ENCODE measurements at regions of chr10 and their contacts with region 1.

Region 1: DNA sequence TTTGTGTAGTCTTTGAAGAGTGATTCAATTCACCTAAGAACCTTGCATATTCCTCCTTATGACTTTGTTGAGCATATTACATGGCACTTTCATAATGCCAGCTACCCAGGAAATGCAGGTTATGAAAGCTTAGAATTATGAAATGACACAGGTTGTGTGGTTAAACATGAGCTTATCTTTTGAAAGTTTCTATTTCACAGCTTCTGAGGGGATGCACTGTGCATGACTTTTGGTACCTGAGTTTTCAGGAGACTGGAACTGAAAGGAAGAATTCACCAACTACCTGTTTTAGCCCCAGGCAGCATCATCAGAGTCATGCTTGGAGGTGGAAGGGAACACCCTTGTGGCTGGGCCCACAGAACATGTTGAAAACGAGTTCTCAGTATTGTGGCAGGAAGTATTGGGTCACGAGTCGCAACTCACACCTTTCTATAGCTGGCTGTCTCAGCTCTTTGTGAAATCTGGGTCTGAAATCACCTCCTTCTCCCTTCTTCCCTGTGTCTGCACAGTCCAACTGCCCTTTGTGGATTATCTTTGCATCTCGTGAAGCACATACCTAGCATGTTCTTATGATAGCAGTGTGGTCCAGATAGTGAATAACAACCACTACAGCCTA is 228.2 kb downstream of the PTEN start:
- DNase-seq: peak; percentile 87
- ATAC-seq: peak; percentile 98
- H3K4me3 Mint-ChIP-seq: no peak overlapping the region
- H3K27ac Mint-ChIP-seq: peak overlapping the region; percentile 55
- H3K4me1 Mint-ChIP-seq: peaks cover 33% of the 10 kb centered on the region
- H3K27me3 Mint-ChIP-seq: peaks cover 32% of the 10 kb centered on the region

Region 2: DNA sequence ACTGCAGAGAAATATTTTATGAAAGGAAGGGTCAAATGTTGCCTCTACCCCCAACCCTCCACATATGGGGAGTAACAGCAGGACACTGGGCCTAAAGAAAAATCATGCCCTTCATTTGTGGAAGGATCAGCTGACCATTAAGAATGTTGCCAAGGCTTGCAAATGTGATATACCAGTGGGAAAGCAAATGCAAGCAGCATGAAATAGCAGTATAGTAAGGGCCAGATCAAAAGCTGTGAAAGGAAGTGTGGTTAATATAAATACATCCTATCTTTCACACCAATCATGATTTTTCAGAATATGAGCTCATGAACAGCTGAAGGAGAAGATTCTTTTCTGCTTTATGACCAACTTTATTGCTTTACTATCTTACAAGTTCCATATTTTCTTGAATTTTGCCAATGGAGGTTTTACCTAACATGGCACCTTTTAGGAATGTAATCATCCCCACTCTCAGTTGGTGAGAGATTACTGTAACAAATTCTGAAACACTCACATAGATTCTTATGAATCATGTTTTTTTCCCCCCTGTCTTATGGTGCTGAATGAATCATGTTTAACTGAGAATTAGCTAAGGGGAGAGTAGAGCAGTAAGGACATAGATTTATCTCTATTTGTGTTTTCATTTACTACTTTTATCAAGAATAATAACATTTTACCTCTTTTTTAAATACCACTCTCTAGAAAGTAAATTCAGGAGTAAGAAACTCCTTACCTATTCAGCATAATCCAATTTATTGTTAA is 261.4 kb before region 1 on chr10:
- CTCF ChIA-PET with region 1: no interaction called
- POLR2A ChIA-PET with region 1: no interaction called
- intact Hi-C with region 1: loop called in 1 of 2 experiments (anchors 1 kb)
- DNase-seq: no peak
- ATAC-seq: peak; percentile 93
- H3K4me3 Mint-ChIP-seq: no peak overlapping the region
- H3K27ac Mint-ChIP-seq: no peak overlapping the region
- H3K4me1 Mint-ChIP-seq: peaks cover 42% of the 10 kb centered on the region
- H3K27me3 Mint-ChIP-seq: no peaks in the 10 kb centered on the region

Region 3: DNA sequence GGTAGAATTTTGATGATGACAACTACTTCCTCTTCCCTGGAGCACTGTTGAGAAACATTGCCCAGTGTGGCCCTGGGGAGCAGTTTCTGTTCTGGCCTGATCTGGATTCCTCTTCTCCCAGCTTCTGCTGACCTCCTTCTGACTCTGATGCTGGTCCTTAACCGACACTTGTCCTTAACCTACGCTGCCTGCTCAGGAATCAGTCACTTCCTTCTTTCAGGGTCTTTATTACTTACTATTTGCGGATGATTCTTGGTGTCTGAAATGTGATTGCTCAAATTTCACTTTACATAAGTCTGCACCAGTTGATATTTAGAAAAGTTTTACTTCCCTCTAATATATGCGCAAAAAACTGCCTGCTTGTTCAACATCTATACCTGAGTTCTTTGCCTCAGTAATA is 64.0 kb before region 1 on chr10:
- CTCF ChIA-PET with region 1: no interaction called
- POLR2A ChIA-PET with region 1: no interaction called
- intact Hi-C with region 1: no loop called
- DNase-seq: no peak
- ATAC-seq: no peak
- H3K4me3 Mint-ChIP-seq: no peak overlapping the region
- H3K27ac Mint-ChIP-seq: no peak overlapping the region
- H3K4me1 Mint-ChIP-seq: peaks cover 14% of the 10 kb centered on the region
- H3K27me3 Mint-ChIP-seq: no peaks in the 10 kb centered on the region

Region 4: GRCh38 chr10:88114368-88114767 is 22.8 kb after region 1 on chr10:
- CTCF ChIA-PET with region 1: interaction called, 19 read pairs
- POLR2A ChIA-PET with region 1: interaction called, 6 read pairs
- intact Hi-C with region 1: loop called (anchors 1 kb)
- DNase-seq: peak; percentile 47
- ATAC-seq: no peak
- H3K4me3 Mint-ChIP-seq: no peak overlapping the region
- H3K27ac Mint-ChIP-seq: no peak overlapping the region
- H3K4me1 Mint-ChIP-seq: peaks cover 9% of the 10 kb centered on the region
- H3K27me3 Mint-ChIP-seq: peaks cover 15% of the 10 kb centered on the region

Region 5: GRCh38 chr10:88194041-88194887 is 102.7 kb after region 1 on chr10:
- CTCF ChIA-PET with region 1: no interaction called
- POLR2A ChIA-PET with region 1: no interaction called
- intact Hi-C with region 1: loop called (anchors 1 kb)
- DNase-seq: peak; percentile 31
- ATAC-seq: peak; percentile 96
- H3K4me3 Mint-ChIP-seq: no peak overlapping the region
- H3K27ac Mint-ChIP-seq: peak overlapping the region; percentile 27
- H3K4me1 Mint-ChIP-seq: peaks cover 38% of the 10 kb centered on the region
- H3K27me3 Mint-ChIP-seq: no peaks in the 10 kb centered on the region

Region 6: GRCh38 chr10:88409236-88409635 is 317.6 kb after region 1 on chr10:
- CTCF ChIA-PET with region 1: interaction called, 3 read pairs
- POLR2A ChIA-PET with region 1: no interaction called
- intact Hi-C with region 1: loop called in 1 of 2 experiments (anchors 1 kb)
- DNase-seq: no peak
- ATAC-seq: peak; percentile 89
- H3K4me3 Mint-ChIP-seq: no peak overlapping the region
- H3K27ac Mint-ChIP-seq: no peak overlapping the region
- H3K4me1 Mint-ChIP-seq: peaks cover 3% of the 10 kb centered on the region
- H3K27me3 Mint-ChIP-seq: peaks cover 4% of the 10 kb centered on the region

Measured in activated CD4-positive, alpha-beta T cell treated with anti-CD3 and anti-CD28 coated beads for 36 hours (primary cell).